Activated B cell treated with CpG ODN at 0.5 μM for 24 hours (primary cell): ENCODE measurements at regions of chr12 and their contacts with region 1.

Region 1: DNA sequence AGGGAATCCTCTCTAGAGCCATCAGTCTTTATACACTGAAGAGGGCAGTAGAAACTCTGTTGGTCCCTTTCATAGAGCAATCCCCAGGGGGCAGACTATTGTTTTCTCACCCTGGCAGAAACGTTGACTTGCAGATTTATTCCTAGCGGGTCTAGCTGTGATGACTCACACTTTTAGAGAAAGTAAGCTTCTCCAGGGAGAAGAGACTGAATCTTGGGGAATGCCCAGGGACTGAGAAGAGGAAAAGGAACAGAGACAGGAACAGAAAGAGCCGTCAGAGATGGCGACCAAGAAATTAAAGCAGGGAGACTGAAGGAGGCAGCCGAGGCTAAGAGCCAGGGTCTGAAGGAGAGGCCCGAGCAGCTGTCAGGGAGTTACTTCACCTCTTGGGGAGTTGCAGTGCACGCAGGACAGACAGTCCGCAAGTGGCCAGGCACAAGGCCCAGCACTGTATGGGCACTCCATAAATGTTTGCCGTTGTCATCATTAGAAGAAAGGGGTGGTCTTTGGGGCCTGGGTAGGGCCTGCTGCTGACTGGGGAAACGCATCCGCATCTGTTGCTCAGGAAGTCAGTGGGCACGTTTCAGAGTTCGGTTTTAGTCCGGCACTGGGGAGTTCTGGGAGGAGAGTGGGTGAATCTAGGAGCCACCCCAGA is 13.0 kb downstream of the PLEKHG6 start:
- DNase-seq: no peak
- ATAC-seq: peak; percentile 63
- H3K4me3 Mint-ChIP-seq: peak overlapping the region; percentile 8
- H3K27ac Mint-ChIP-seq: peak overlapping the region; percentile 42
- H3K4me1 Mint-ChIP-seq: peaks cover 19% of the 10 kb centered on the region
- H3K27me3 Mint-ChIP-seq: peaks cover 77% of the 10 kb centered on the region
- CTCF ChIP-seq: no peak

Region 2: DNA sequence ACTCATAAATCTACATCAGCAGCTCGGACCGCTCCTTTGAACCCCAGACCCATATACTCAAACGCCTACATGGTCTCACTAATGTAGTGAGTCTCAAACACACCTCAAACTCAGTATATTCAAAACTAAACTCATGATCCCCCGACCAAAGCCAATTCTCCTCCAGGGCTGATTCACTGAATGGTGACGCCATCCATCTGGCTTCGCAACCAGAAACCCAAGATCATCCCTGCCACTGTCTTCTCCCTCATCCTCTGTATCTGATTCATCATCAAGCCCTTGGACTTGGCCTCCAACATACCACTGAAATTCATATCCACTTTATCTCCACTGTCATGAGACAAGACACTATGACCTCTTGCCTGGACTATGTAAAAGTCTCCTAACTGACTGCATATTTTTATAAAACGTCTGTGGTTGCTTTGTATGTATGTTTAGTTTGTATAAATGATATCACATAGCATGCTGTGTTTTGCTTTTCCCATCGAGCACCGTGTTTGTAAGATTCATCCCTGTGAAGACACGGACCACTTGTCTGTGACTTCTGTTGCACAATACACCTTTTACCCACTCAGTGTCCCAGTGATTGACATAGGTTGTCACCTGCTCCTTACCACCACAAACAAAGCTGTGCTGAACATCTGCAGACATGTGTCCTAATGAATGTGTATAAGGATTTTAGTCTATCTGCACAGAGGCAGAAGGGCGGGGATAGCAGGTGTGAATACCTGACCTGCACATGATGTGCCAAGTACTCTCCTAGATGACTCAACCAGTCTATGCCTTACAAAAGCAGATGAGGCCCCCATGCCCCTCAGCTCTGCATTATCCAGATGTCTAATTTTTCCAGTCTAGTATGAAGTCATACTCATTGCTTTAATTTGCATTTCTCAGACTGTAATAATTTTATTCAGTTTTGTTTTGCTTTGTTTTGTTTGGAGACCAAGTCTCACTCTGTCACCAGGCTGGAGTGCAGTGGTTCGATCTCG is 275.9 kb before region 1 on chr12:
- CTCF ChIA-PET with region 1: no interaction called
- POLR2A ChIA-PET with region 1: no interaction called
- intact Hi-C with region 1: no loop called
- DNase-seq: no peak
- ATAC-seq: no peak
- H3K4me3 Mint-ChIP-seq: no peak overlapping the region
- H3K27ac Mint-ChIP-seq: no peak overlapping the region
- H3K4me1 Mint-ChIP-seq: no peaks in the 10 kb centered on the region
- H3K27me3 Mint-ChIP-seq: peaks cover 12% of the 10 kb centered on the region
- CTCF ChIP-seq: no peak

Region 3: DNA sequence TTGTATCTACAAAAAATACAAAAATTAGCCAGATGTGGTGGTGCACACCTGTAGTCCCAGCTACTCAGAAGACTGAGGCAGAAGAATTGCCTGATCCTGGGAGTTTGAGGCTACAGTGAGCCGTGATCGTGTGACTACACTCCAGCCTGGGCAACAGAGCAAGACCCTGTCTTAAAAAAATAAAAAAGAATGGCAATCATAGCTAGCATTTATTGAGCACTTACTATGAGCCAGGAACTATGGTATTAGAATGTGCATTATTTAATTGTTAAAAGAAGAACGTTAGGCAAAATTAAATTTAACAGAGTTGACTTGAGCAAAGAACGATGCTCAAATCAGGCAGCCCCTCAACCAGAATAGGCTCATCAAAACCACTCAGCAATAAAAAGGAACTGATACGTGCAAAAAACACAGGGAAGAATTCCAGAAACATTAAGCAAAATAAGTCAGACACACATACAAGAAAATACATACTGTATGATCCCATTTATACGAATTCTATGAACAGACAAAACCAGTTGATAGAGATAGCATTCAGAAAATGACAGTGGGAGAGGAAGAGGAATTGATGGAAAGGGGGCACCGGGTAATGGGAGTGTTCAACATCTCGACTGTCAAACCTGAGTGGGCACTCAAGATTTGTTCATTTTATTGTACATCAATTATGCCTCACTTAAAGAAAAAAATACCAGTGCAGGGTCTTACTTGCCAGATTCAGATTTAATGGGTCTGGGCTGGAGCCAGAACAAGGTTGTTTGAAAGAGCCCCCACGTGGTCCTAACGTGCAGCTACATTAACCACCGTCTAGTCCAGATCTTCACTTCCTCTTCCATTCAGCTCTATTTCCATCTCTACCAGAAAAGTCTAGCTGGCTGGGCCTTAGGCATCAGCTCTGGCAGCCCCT is 43.9 kb after region 1 on chr12:
- CTCF ChIA-PET with region 1: no interaction called
- POLR2A ChIA-PET with region 1: interaction called, 7 read pairs
- intact Hi-C with region 1: loop called (anchors 1 kb)
- DNase-seq: no peak
- ATAC-seq: peak; percentile 77
- H3K4me3 Mint-ChIP-seq: no peak overlapping the region
- H3K27ac Mint-ChIP-seq: no peak overlapping the region
- H3K4me1 Mint-ChIP-seq: peaks cover 9% of the 10 kb centered on the region
- H3K27me3 Mint-ChIP-seq: peaks cover 16% of the 10 kb centered on the region
- CTCF ChIP-seq: no peak